CD14-positive monocyte (primary cell): ENCODE measurements at regions of chr3 and their contacts with region 1.

Region 1: GRCh38 chr3:177359593-177360357 is 162.5 kb upstream of the TBL1XR1 start:
- DNase-seq: peak; percentile 91 to 95 (median 93)
- H3K4me3 ChIP-seq: peak overlapping the region; percentile 56 to 77 (median 66)
- H3K4me3 Mint-ChIP-seq: peak overlapping the region; percentile 79 to 92
- H3K27ac ChIP-seq: peak overlapping the region; percentile 87 to 89
- H3K27ac Mint-ChIP-seq: peak overlapping the region; percentile 95 to 99 (median 98)
- H3K4me1 ChIP-seq: peaks cover 49 to 59% of the 10 kb centered on the region in 2 donors
- H3K4me1 Mint-ChIP-seq: peaks cover 54% of the 10 kb centered on the region
- H3K27me3 ChIP-seq: no peaks in the 10 kb centered on the region
- H3K27me3 Mint-ChIP-seq: peaks cover 0 to 4% (median 0%) of the 10 kb centered on the region in 3 donors
- CTCF ChIP-seq: no peak

Region 2: GRCh38 chr3:177197041-177197727 is 162.6 kb before region 1 on chr3 and contains the start of gene TBL1XR1:
- intact Hi-C with region 1: loop called (anchors 1 kb)
- DNase-seq: peak; percentile 76 to 80 (median 79)
- H3K4me3 ChIP-seq: peak within 1 kb of the TSS; percentile 86 to 98 (median 96)
- H3K4me3 Mint-ChIP-seq: peak within 1 kb of the TSS; percentile 96 to 97
- H3K27ac ChIP-seq: peak within 1 kb of the TSS; percentile 77 to 92
- H3K27ac Mint-ChIP-seq: peak within 1 kb of the TSS; percentile 92 to 98 (median 96)
- H3K4me1 ChIP-seq: peaks cover 22 to 42% of the 10 kb centered on the region in 2 donors
- H3K4me1 Mint-ChIP-seq: peaks cover 44% of the 10 kb centered on the region
- H3K27me3 ChIP-seq: no peaks in the 10 kb centered on the region
- H3K27me3 Mint-ChIP-seq: no peaks in the 10 kb centered on the region
- CTCF ChIP-seq: no peak
- polyA plus RNA-seq, gene TBL1XR1: 10.2 to 20.4 (median 18.3) TPM

Region 3: DNA sequence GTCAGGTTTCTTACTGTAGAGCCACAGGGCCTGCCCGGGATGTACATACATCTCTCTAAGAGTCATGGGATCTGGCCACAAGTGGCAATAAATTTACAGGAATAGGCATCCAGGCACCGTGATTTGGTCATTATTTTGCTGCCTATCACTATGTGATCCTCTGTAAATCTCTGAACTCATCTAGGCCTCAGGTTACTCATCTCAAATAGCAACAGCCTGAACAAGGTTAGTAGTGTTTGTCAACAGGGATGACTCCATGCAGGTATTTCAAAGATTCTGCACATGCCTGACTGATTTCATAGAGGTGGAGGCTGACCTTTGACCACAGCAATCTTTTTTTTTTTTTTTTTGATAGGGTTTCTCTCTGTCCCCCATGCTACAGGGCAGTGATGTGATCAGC is 73.7 kb before region 1 on chr3:
- intact Hi-C with region 1: loop called (anchors 5 to 10 kb)
- DNase-seq: no peak
- H3K4me3 ChIP-seq: no peak overlapping the region
- H3K4me3 Mint-ChIP-seq: no peak overlapping the region
- H3K27ac ChIP-seq: no peak overlapping the region
- H3K27ac Mint-ChIP-seq: no peak overlapping the region
- H3K4me1 ChIP-seq: peaks cover 60 to 61% of the 10 kb centered on the region in 2 donors
- H3K4me1 Mint-ChIP-seq: peaks cover 59% of the 10 kb centered on the region
- H3K27me3 ChIP-seq: no peaks in the 10 kb centered on the region
- H3K27me3 Mint-ChIP-seq: peaks cover 0 to 4% (median 1%) of the 10 kb centered on the region in 3 donors
- CTCF ChIP-seq: no peak

Region 4: DNA sequence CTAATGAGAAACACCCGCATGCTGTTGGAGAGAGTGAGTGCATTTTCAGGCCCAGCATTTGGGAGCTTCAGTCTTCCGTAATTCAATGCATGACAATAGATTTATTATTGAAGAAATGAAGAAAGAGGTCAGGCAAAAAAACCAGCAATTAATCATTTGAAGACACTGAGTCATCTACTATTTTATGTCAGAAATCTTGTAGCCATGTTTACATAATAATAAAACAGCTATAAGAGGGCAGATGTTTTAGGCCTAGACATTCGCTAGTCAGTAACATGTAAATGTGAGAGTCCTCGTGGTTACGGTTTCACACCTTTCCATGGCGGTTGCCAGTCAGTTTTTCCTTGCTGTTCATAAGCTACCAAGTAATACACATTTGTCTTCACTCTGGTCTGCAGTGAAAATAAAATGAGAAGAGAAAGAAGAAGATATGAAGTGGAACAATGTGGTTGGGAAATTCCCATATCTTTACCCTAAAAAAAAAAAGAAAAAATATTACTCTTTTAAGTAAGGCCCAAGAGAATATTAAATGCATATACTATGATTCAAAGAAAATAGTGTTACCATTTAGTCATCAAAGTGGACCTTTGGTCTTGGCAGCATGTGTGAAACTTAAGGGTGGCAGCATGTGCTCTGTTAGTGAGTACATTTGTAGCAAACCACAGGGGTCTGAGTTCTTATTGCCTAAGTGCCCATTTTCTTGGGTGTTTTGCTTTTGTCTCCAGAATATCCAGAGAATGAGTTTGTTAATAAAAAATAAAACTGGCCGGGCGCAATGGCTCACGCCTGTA is 22.0 kb before region 1 on chr3:
- intact Hi-C with region 1: loop called in 1 of 2 experiments (anchors 2 kb)
- DNase-seq: peak; percentile 13 to 72 (median 35)
- H3K4me3 ChIP-seq: peak overlapping the region in 1 of 3 experiments; percentile 19
- H3K4me3 Mint-ChIP-seq: no peak overlapping the region
- H3K27ac ChIP-seq: peak overlapping the region; percentile 3 to 42
- H3K27ac Mint-ChIP-seq: peak overlapping the region; percentile 64 to 88 (median 70)
- H3K4me1 ChIP-seq: peaks cover 70 to 74% of the 10 kb centered on the region in 2 donors
- H3K4me1 Mint-ChIP-seq: peaks cover 69% of the 10 kb centered on the region
- H3K27me3 ChIP-seq: no peaks in the 10 kb centered on the region
- H3K27me3 Mint-ChIP-seq: no peaks in the 10 kb centered on the region
- CTCF ChIP-seq: no peak

Region 5: GRCh38 chr3:177414093-177414492 is 54.3 kb after region 1 on chr3:
- intact Hi-C with region 1: no loop called
- DNase-seq: no peak
- H3K4me3 ChIP-seq: no peak overlapping the region
- H3K4me3 Mint-ChIP-seq: no peak overlapping the region
- H3K27ac ChIP-seq: no peak overlapping the region
- H3K27ac Mint-ChIP-seq: no peak overlapping the region
- H3K4me1 ChIP-seq: peaks cover 10 to 12% of the 10 kb centered on the region in 2 donors
- H3K4me1 Mint-ChIP-seq: peaks cover 10% of the 10 kb centered on the region
- H3K27me3 ChIP-seq: no peaks in the 10 kb centered on the region
- H3K27me3 Mint-ChIP-seq: peaks cover 0 to 2% (median 0%) of the 10 kb centered on the region in 3 donors
- CTCF ChIP-seq: no peak

Region 6: GRCh38 chr3:177426878-177427495 is 67.2 kb after region 1 on chr3:
- intact Hi-C with region 1: loop called in 1 of 2 experiments (anchors 10 kb)
- DNase-seq: peak; percentile 72 to 89 (median 80)
- H3K4me3 ChIP-seq: peak overlapping the region in 2 of 3 experiments; percentile 27 to 37
- H3K4me3 Mint-ChIP-seq: peak overlapping the region; percentile 52 to 60
- H3K27ac ChIP-seq: peak overlapping the region; percentile 15 to 75
- H3K27ac Mint-ChIP-seq: peak overlapping the region; percentile 83 to 92 (median 88)
- H3K4me1 ChIP-seq: peaks cover 45 to 54% of the 10 kb centered on the region in 2 donors
- H3K4me1 Mint-ChIP-seq: peaks cover 51% of the 10 kb centered on the region
- H3K27me3 ChIP-seq: no peaks in the 10 kb centered on the region
- H3K27me3 Mint-ChIP-seq: no peaks in the 10 kb centered on the region
- CTCF ChIP-seq: no peak

Region 7: GRCh38 chr3:177603148-177603603 is 243.4 kb after region 1 on chr3:
- intact Hi-C with region 1: loop called in 1 of 2 experiments (anchors 10 kb)
- DNase-seq: peak; percentile 24 to 40 (median 25)
- H3K4me3 ChIP-seq: peak overlapping the region in 1 of 3 experiments; percentile 15
- H3K4me3 Mint-ChIP-seq: peak overlapping the region in 1 of 2 donors; percentile 58
- H3K27ac ChIP-seq: peak overlapping the region in 1 of 2 donors; percentile 42
- H3K27ac Mint-ChIP-seq: peak overlapping the region in 6 of 7 donors; percentile 61 to 93 (median 75)
- H3K4me1 ChIP-seq: peaks cover 55 to 60% of the 10 kb centered on the region in 2 donors
- H3K4me1 Mint-ChIP-seq: peaks cover 56% of the 10 kb centered on the region
- H3K27me3 ChIP-seq: no peaks in the 10 kb centered on the region
- H3K27me3 Mint-ChIP-seq: peaks cover 0 to 8% (median 2%) of the 10 kb centered on the region in 3 donors
- CTCF ChIP-seq: no peak

Region 8: DNA sequence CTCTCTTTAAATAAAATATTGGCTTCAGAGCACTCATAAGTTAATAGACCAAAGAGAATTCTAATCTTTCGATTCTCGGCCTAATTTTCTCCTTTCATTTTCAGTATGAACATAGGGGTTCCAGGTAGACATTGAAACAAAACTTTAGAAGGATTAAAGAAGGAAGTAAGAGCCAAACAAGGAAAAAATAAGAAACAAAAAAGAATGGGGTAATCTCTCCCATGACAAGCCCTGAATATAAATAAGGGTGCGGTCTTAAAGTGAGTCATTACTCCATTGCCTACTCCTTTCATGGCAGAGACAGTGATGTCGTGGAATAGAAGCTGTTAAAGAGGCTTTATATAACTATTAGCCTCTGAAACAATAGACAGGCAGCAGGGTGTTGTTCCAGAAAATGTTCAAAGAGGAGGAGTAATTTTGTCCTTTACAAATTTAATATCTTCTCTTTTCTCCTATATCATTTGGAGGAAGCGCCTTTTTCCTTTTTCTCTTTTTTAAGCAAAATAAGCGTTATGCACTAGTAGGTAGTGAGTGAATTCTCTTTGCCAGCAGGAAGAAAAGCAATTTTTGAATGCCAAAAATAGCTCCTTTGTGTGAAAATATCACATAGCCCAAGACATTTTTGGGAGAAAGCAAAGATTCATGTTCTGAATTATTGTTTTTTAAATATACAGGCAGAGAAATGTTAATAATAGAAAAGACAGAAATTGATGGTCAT is 568.5 kb after region 1 on chr3:
- intact Hi-C with region 1: loop called in 1 of 2 experiments (anchors 10 kb)
- DNase-seq: peak; percentile 75 to 88 (median 86)
- H3K4me3 ChIP-seq: peak overlapping the region in 1 of 3 experiments; percentile 39
- H3K4me3 Mint-ChIP-seq: peak overlapping the region in 1 of 2 donors; percentile 65
- H3K27ac ChIP-seq: peak overlapping the region in 1 of 2 donors; percentile 76
- H3K27ac Mint-ChIP-seq: peak overlapping the region; percentile 73 to 93 (median 90)
- H3K4me1 ChIP-seq: peaks cover 13 to 29% of the 10 kb centered on the region in 2 donors
- H3K4me1 Mint-ChIP-seq: peaks cover 25% of the 10 kb centered on the region
- H3K27me3 ChIP-seq: no peaks in the 10 kb centered on the region
- H3K27me3 Mint-ChIP-seq: no peaks in the 10 kb centered on the region
- CTCF ChIP-seq: no peak